ENCODE measurements at regions of chr17 and their contacts with region 1.

Region 1: DNA sequence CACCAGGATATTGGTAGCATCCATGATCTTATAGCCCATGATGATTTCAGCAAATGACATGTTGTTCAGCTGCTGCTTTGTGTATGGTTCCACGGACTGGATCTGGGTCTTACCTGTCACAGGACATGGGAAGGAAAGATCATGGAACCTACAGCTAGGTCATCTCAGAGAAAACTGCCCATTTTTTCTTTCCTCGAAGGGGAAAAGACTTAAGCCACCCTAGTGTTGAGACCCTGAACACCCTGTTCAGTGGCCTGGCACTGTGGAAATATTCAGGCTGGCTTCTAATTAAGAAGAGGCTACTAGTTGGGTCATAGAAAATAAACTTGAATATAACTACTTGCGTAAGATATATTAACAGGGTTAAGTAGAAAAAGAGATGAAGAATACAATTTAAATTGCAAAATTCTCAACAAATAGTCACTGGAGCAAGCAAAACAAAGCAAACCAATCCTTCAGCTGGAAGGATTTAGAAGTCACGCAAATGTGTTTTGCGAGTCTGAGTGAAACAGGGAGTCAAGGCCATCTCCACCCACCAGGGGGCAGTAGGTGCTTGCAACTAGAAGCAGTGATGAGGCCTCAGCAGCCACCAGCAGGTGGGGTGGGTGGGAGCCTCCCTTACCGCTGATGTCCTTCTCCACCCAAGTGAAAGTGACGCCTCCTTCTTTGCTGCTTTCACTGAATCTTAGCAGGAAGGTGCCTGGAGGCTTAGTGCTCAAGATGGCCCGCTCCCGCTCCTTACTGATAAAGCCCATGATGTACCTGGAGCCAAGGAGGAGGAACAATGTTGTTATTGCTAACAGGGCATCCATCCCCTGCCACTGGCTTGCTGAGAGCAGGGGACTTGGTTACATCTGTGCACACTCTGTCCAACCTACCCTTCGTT is 34.3 kb downstream of the STAT5A start:
- DNase-seq: peak; percentile 94 to 96
- H3K4me3 ChIP-seq: no peak overlapping the region
- H3K4me3 Mint-ChIP-seq: no peak overlapping the region
- H3K27ac Mint-ChIP-seq: no peak overlapping the region
- H3K4me1 ChIP-seq: peaks cover 30% of the 10 kb centered on the region
- H3K4me1 Mint-ChIP-seq: peaks cover under 1% of the 10 kb centered on the region
- H3K27me3 ChIP-seq: no peaks in the 10 kb centered on the region
- H3K27me3 Mint-ChIP-seq: no peaks in the 10 kb centered on the region
- CTCF ChIP-seq: peak; percentile 100

Region 2: GRCh38 chr17:42072323-42073187 is 250.1 kb before region 1 on chr17:
- CTCF ChIA-PET with region 1: no interaction called
- POLR2A ChIA-PET with region 1: no interaction called
- intact Hi-C with region 1: no loop called
- DNase-seq: peak in 1 of 2 experiments; percentile 52
- H3K4me3 ChIP-seq: no peak overlapping the region
- H3K4me3 Mint-ChIP-seq: no peak overlapping the region
- H3K27ac Mint-ChIP-seq: no peak overlapping the region
- H3K4me1 ChIP-seq: peaks cover 8% of the 10 kb centered on the region
- H3K4me1 Mint-ChIP-seq: no peaks in the 10 kb centered on the region
- H3K27me3 ChIP-seq: no peaks in the 10 kb centered on the region
- H3K27me3 Mint-ChIP-seq: peaks cover 3% of the 10 kb centered on the region
- CTCF ChIP-seq: peak; percentile 7 to 13

Region 3: GRCh38 chr17:42305543-42306384 is 16.9 kb before region 1 on chr17:
- CTCF ChIA-PET with region 1: interaction called, 12 read pairs
- POLR2A ChIA-PET with region 1: no interaction called
- intact Hi-C with region 1: no loop called
- DNase-seq: no peak
- H3K4me3 ChIP-seq: no peak overlapping the region
- H3K4me3 Mint-ChIP-seq: no peak overlapping the region
- H3K27ac Mint-ChIP-seq: no peak overlapping the region
- H3K4me1 ChIP-seq: no peaks in the 10 kb centered on the region
- H3K4me1 Mint-ChIP-seq: no peaks in the 10 kb centered on the region
- H3K27me3 ChIP-seq: no peaks in the 10 kb centered on the region
- H3K27me3 Mint-ChIP-seq: no peaks in the 10 kb centered on the region
- CTCF ChIP-seq: peak in 1 of 2 experiments; percentile 7

Region 4: GRCh38 chr17:42388381-42389134 is 65.9 kb after region 1 on chr17 and contains the start of gene STAT3:
- CTCF ChIA-PET with region 1: interaction called, 7 read pairs
- POLR2A ChIA-PET with region 1: interaction called, 11 read pairs
- intact Hi-C with region 1: loop called (anchors 1 kb)
- DNase-seq: peak; percentile 100
- H3K4me3 ChIP-seq: peak within 1 kb of the TSS; percentile 98
- H3K4me3 Mint-ChIP-seq: peak within 1 kb of the TSS; percentile 98
- H3K27ac Mint-ChIP-seq: peak within 1 kb of the TSS; percentile 91
- H3K4me1 ChIP-seq: peaks cover 15% of the 10 kb centered on the region
- H3K4me1 Mint-ChIP-seq: peaks cover 24% of the 10 kb centered on the region
- H3K27me3 ChIP-seq: no peaks in the 10 kb centered on the region
- H3K27me3 Mint-ChIP-seq: no peaks in the 10 kb centered on the region
- CTCF ChIP-seq: no peak
- total RNA-seq, gene STAT3: 72.1 and 73.7 TPM in 2 replicates

Region 5: DNA sequence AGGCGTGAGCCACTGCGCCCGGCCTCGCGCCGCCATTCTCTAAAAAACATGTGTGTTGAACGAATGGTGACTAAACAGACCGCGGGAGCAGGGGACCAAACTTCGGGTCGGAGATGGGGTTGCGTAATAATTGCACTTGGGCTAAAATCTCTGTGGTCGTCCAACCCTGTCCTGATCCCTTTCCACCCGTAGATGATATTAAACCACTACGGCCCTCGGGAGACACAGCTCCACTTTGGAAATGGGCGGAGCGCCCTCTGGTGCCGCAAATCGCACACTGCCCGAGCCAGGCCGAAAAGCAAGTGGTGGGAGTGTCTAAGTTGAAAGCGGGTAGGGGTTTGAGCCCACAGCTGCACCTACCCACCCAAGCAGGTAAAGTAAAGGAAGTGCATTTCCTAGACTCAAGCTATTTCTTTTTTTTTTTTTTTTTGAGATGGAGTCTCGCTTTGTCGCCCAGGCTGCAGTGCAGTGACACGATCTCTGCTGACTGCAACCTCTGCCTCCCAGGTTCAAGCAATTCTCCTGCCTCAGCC is 83.4 kb after region 1 on chr17:
- CTCF ChIA-PET with region 1: interaction called, 19 read pairs
- POLR2A ChIA-PET with region 1: no interaction called
- intact Hi-C with region 1: loop called (anchors 1 kb)
- DNase-seq: peak; percentile 79 to 88
- H3K4me3 ChIP-seq: no peak overlapping the region
- H3K4me3 Mint-ChIP-seq: no peak overlapping the region
- H3K27ac Mint-ChIP-seq: no peak overlapping the region
- H3K4me1 ChIP-seq: peaks cover 19% of the 10 kb centered on the region
- H3K4me1 Mint-ChIP-seq: peaks cover 41% of the 10 kb centered on the region
- H3K27me3 ChIP-seq: no peaks in the 10 kb centered on the region
- H3K27me3 Mint-ChIP-seq: no peaks in the 10 kb centered on the region
- CTCF ChIP-seq: peak; percentile 86 to 93

Region 6: DNA sequence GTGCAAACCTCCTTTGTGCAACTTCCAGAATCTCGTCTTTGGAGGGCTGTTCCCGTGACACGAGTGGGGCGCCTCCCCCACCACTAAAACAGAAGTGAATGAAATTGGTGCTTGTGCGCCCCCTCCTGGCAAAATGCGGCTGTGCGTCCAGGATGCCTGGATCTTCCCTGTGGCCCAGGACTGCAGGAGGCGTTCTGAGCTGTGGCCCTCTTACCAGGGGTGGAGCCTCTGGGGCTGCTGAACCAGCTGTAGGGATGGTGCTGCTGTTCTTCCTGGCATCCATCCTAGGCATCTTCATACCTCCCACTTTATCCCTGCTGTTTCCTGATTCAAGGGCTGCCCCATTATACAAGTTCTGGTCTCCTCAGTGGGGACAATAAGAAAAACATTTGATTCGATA is 194.9 kb after region 1 on chr17:
- CTCF ChIA-PET with region 1: interaction called, 8 read pairs
- POLR2A ChIA-PET with region 1: no interaction called
- intact Hi-C with region 1: loop called (anchors 1 kb)
- DNase-seq: peak; percentile 82 to 89
- H3K4me3 ChIP-seq: no peak overlapping the region
- H3K4me3 Mint-ChIP-seq: no peak overlapping the region
- H3K27ac Mint-ChIP-seq: peak overlapping the region; percentile 90
- H3K4me1 ChIP-seq: peaks cover 51% of the 10 kb centered on the region
- H3K4me1 Mint-ChIP-seq: peaks cover 46% of the 10 kb centered on the region
- H3K27me3 ChIP-seq: no peaks in the 10 kb centered on the region
- H3K27me3 Mint-ChIP-seq: no peaks in the 10 kb centered on the region
- CTCF ChIP-seq: peak; percentile 90 to 97

Region 7: GRCh38 chr17:42527273-42527703 is 204.7 kb after region 1 on chr17:
- CTCF ChIA-PET with region 1: interaction called, 17 read pairs
- POLR2A ChIA-PET with region 1: interaction called, 3 read pairs
- intact Hi-C with region 1: loop called (anchors 1 kb)
- DNase-seq: peak; percentile 81 to 82
- H3K4me3 ChIP-seq: no peak overlapping the region
- H3K4me3 Mint-ChIP-seq: no peak overlapping the region
- H3K27ac Mint-ChIP-seq: peak overlapping the region; percentile 55
- H3K4me1 ChIP-seq: peaks cover 46% of the 10 kb centered on the region
- H3K4me1 Mint-ChIP-seq: peaks cover 44% of the 10 kb centered on the region
- H3K27me3 ChIP-seq: no peaks in the 10 kb centered on the region
- H3K27me3 Mint-ChIP-seq: no peaks in the 10 kb centered on the region
- CTCF ChIP-seq: peak; percentile 82 to 90

Measured in Caco-2 (cell line).